ENCODE measurements at regions of chr5 and their contacts with region 1.

Region 1: GRCh38 chr5:32232441-32233219 is 58.5 kb upstream of the GOLPH3 start:
- DNase-seq: peak; percentile 43
- ATAC-seq: peak; percentile 91
- H3K4me3 ChIP-seq: no peak overlapping the region
- H3K27ac ChIP-seq: no peak overlapping the region
- H3K4me1 ChIP-seq: peaks cover 15% of the 10 kb centered on the region
- H3K27me3 ChIP-seq: no peaks in the 10 kb centered on the region
- CTCF ChIP-seq: peak; percentile 89

Region 2: GRCh38 chr5:32261198-32261597 is 28.6 kb after region 1 on chr5:
- CTCF ChIA-PET with region 1: no interaction called
- POLR2A ChIA-PET with region 1: interaction called, 10 read pairs
- in situ Hi-C with region 1: no loop called
- intact Hi-C with region 1: no loop called
- DNase-seq: no peak
- ATAC-seq: no peak
- H3K4me3 ChIP-seq: no peak overlapping the region
- H3K27ac ChIP-seq: no peak overlapping the region
- H3K4me1 ChIP-seq: no peaks in the 10 kb centered on the region
- H3K27me3 ChIP-seq: no peaks in the 10 kb centered on the region
- CTCF ChIP-seq: no peak

Region 3: GRCh38 chr5:32329308-32329834 is 96.7 kb after region 1 on chr5:
- CTCF ChIA-PET with region 1: interaction called, 13 read pairs
- POLR2A ChIA-PET with region 1: no interaction called
- in situ Hi-C with region 1: no loop called
- intact Hi-C with region 1: loop called (anchors 1 kb)
- DNase-seq: peak; percentile 67
- ATAC-seq: peak; percentile 98
- H3K4me3 ChIP-seq: no peak overlapping the region
- H3K27ac ChIP-seq: no peak overlapping the region
- H3K4me1 ChIP-seq: no peaks in the 10 kb centered on the region
- H3K27me3 ChIP-seq: no peaks in the 10 kb centered on the region
- CTCF ChIP-seq: peak; percentile 91